ENCODE measurements at regions of chr12 and their contacts with region 1.

Region 1: DNA sequence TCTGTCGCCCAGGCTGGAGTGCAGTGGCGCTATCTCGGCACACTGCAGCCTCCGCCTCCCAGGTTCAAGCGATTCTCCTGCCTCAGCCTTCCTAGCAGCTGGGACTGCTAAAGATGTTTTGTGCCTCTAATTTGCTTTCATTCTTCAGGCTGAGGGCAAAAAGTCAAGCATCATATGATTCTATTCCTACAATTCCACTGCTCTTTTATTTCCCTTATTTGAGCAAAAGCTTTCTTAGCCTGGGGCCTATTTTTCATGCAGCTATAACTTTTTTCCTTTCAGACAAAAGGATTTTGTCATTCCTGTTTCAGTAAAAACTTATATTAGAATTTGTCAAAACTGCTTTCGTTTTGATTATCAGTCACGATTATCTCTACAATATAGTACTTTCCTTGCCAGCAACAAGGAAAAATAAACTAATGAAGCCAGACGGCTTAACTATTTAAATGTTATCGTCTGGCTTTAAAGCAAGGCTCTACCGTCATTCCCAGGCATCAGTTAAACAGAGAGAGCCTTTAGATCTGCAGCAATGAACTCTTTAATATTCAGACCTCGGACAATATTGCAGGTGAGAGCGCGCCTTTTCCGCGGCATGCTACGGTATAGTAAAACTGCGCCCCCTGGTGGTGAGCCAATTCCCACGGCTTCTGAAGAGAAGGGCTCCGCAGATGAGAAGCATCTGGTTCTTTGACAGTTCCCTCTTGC is 1.4 kb upstream of the SLC2A13 start:
- DNase-seq: peak; percentile 91
- H3K4me3 Mint-ChIP-seq: peak overlapping the region; percentile 66
- H3K27ac Mint-ChIP-seq: peak overlapping the region; percentile 38
- H3K4me1 Mint-ChIP-seq: peaks cover 31% of the 10 kb centered on the region
- H3K27me3 Mint-ChIP-seq: peaks cover 19% of the 10 kb centered on the region

Region 2: GRCh38 chr12:40010899-40011774 is 96.1 kb before region 1 on chr12:
- CTCF ChIA-PET with region 1: interaction called, 86 read pairs
- DNase-seq: peak; percentile 71
- H3K4me3 Mint-ChIP-seq: peak overlapping the region; percentile 30
- H3K27ac Mint-ChIP-seq: no peak overlapping the region
- H3K4me1 Mint-ChIP-seq: peaks cover 13% of the 10 kb centered on the region
- H3K27me3 Mint-ChIP-seq: no peaks in the 10 kb centered on the region

Region 3: GRCh38 chr12:40117818-40118217 is 10.6 kb after region 1 on chr12:
- CTCF ChIA-PET with region 1: interaction called, 15 read pairs
- DNase-seq: no peak
- H3K4me3 Mint-ChIP-seq: no peak overlapping the region
- H3K27ac Mint-ChIP-seq: no peak overlapping the region
- H3K4me1 Mint-ChIP-seq: peaks cover 11% of the 10 kb centered on the region
- H3K27me3 Mint-ChIP-seq: no peaks in the 10 kb centered on the region

Region 4: DNA sequence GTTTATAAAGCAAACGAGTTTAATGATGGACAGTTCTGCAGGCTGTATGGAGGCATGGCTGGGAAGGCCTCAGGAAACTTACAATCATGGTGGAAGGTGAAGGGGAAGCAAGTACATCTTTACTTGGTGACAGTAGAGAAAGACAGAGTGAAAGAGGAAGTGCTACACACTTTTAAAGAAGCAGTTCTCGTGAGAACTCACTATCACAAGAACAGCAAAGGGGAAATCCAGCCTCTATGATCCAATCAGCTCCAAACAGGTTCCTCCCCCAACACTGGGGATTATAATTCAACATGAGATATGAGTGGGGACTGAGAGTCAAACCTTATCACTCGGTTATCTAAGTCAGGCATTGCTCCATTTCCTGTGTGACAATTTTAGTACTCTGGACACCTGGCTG is 395.1 kb after region 1 on chr12:
- CTCF ChIA-PET with region 1: no interaction called
- DNase-seq: no peak
- H3K4me3 Mint-ChIP-seq: no peak overlapping the region
- H3K27ac Mint-ChIP-seq: no peak overlapping the region
- H3K4me1 Mint-ChIP-seq: peaks cover 3% of the 10 kb centered on the region
- H3K27me3 Mint-ChIP-seq: no peaks in the 10 kb centered on the region